ENCODE measurements at regions of chr17 and their contacts with region 1.

Region 1: GRCh38 chr17:80195731-80196529 is 24.2 kb downstream of the SGSH start:
- DNase-seq: peak; percentile 24
- H3K4me3 ChIP-seq: no peak overlapping the region
- H3K27ac ChIP-seq: no peak overlapping the region
- H3K4me1 ChIP-seq: no peaks in the 10 kb centered on the region
- H3K27me3 ChIP-seq: peaks cover 0 to 5% of the 10 kb centered on the region in 2 experiments
- CTCF ChIP-seq: peak; percentile 89 to 92
- POLR2A ChIP-seq: no peak

Region 2: DNA sequence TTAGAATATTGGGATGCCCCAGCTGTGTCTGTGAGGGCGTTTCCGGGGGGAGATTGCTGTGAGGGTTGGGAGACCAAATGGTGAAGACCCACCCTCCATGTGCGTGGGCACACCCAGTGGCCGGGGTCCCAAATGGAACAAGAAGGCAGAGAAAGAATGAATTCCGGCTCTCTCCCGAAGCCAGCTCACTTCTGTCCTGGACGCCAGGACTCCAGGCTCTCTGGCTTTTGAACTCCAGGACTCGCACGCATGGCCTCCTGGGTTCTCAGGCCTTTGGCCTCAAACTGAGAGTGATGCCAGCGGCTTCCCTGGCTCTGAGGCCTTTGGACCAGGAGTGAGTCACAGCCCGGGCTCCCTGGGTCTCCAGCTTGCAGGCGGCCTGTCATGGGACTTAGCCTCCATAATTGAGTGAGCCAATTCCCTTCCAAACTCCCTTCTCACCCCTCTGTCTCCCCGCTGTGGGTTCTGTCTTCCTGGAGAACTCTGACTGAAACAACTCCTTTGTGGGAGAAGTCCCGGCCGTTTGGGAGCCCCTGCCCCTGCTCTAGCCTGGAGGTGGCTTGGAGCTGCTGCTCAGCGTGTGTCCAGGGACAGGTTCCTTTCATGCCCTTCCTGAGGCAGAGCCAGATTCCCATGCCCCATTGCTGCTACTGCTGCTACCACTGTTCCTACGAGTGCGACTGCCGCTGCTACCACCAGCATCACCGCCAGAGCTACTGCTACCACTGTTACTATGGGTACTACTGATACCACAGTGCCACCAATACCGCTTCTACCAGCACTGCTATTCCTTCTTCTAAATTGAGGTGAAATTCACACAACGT is 306.9 kb before region 1 on chr17:
- CTCF ChIA-PET with region 1: no interaction called
- POLR2A ChIA-PET with region 1: no interaction called
- dilution Hi-C with region 1: no loop called
- intact Hi-C with region 1: no loop called
- DNase-seq: no peak
- H3K4me3 ChIP-seq: no peak overlapping the region
- H3K27ac ChIP-seq: no peak overlapping the region
- H3K4me1 ChIP-seq: no peaks in the 10 kb centered on the region
- H3K27me3 ChIP-seq: peaks cover 6 to 10% of the 10 kb centered on the region in 2 experiments
- CTCF ChIP-seq: no peak
- POLR2A ChIP-seq: no peak

Region 3: GRCh38 chr17:80109713-80110446 is 86.0 kb before region 1 on chr17:
- CTCF ChIA-PET with region 1: no interaction called
- POLR2A ChIA-PET with region 1: no interaction called
- dilution Hi-C with region 1: no loop called
- intact Hi-C with region 1: no loop called
- DNase-seq: no peak
- H3K4me3 ChIP-seq: no peak overlapping the region
- H3K27ac ChIP-seq: no peak overlapping the region
- H3K4me1 ChIP-seq: no peaks in the 10 kb centered on the region
- H3K27me3 ChIP-seq: no peaks in the 10 kb centered on the region
- CTCF ChIP-seq: no peak
- POLR2A ChIP-seq: no peak

Region 4: GRCh38 chr17:80212962-80213642 is 17.2 kb after region 1 on chr17:
- CTCF ChIA-PET with region 1: interaction called, 32 read pairs
- POLR2A ChIA-PET with region 1: no interaction called
- dilution Hi-C with region 1: no loop called
- intact Hi-C with region 1: no loop called
- DNase-seq: no peak
- H3K4me3 ChIP-seq: no peak overlapping the region
- H3K27ac ChIP-seq: no peak overlapping the region
- H3K4me1 ChIP-seq: no peaks in the 10 kb centered on the region
- H3K27me3 ChIP-seq: no peaks in the 10 kb centered on the region
- CTCF ChIP-seq: no peak
- POLR2A ChIP-seq: no peak

Region 5: GRCh38 chr17:80279895-80280294 is 84.0 kb after region 1 on chr17:
- CTCF ChIA-PET with region 1: interaction called, 35 read pairs
- POLR2A ChIA-PET with region 1: no interaction called
- dilution Hi-C with region 1: no loop called
- intact Hi-C with region 1: no loop called
- DNase-seq: peak; percentile 56
- H3K4me3 ChIP-seq: no peak overlapping the region
- H3K27ac ChIP-seq: no peak overlapping the region
- H3K4me1 ChIP-seq: peaks cover 20% of the 10 kb centered on the region
- H3K27me3 ChIP-seq: no peaks in the 10 kb centered on the region
- CTCF ChIP-seq: peak in 1 of 2 donors; percentile 11
- POLR2A ChIP-seq: no peak

Region 6: DNA sequence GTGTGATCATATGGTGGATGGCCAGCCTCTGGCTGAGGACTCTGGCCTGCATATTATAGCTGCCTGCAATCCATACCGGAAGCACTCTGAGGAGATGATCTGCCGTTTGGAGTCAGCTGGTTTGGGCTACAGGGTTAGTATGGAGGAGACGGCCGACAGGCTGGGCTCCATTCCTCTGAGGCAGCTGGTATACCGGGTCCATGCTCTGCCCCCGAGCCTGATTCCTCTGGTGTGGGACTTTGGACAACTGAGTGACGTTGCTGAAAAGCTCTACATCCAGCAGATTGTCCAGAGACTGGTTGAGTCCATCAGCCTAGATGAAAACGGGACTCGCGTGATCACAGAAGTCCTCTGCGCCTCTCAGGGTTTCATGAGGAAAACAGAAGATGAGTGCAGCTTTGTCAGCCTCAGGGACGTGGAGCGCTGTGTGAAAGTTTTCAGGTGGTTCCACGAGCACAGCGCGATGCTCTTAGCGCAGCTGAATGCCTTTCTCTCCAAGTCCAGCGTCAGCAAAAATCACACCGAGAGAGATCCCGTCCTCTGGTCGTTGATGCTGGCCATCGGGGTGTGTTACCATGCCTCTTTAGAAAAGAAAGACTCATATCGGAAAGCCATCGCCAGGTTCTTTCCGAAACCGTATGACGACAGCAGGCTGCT is 150.0 kb after region 1 on chr17:
- CTCF ChIA-PET with region 1: interaction called, 19 read pairs
- POLR2A ChIA-PET with region 1: no interaction called
- dilution Hi-C with region 1: no loop called
- intact Hi-C with region 1: no loop called
- DNase-seq: no peak
- H3K4me3 ChIP-seq: no peak overlapping the region
- H3K27ac ChIP-seq: no peak overlapping the region
- H3K4me1 ChIP-seq: no peaks in the 10 kb centered on the region
- H3K27me3 ChIP-seq: no peaks in the 10 kb centered on the region
- CTCF ChIP-seq: no peak
- POLR2A ChIP-seq: no peak

Measured in endothelial cell of umbilical vein (primary cell).